ENCODE measurements at regions of chr16 and their contacts with region 1.

Region 1: DNA sequence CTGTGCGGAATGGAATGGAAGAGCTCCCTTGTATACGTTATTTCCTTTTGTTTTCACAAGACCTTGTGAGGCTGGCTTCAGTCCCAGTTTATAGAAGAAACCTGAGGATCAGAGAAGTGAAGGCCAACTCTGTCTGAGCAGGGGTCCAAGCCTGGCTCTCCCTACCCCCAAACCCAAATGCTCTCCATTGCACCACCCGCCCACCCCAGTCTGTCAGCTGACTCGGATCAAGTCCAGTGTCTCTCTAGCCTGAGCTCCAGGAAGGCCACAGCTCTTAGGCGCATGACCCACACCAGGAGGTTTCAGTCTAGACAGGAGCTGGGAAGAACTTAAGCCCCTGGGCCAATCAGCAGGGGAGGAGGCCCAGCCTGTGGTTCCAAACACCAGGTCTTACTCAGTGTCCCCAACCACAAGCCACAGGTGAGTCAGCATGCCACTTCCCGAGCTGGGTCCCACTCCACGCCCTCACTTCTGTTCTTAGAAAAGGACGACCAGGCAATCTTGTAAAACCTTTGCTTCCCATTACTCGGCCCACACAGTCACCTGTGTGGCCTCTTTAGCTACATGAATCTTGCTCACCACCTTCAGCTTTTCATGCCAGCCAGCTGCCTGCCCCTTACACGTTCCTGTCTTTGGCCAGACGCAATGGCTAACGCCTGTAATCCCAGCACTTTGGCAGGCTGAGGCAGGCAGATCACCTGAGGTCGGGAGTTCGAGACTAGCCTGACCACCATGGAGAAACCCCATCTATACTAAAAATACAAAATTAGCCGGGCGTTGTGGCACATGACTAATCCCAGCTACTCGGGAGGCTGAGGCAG is 27.8 kb downstream of the TK2 start:
- DNase-seq: peak; percentile 97
- H3K4me3 Mint-ChIP-seq: peak overlapping the region; percentile 64
- H3K27ac Mint-ChIP-seq: peak overlapping the region; percentile 95
- H3K4me1 Mint-ChIP-seq: peaks cover 95% of the 10 kb centered on the region
- H3K27me3 Mint-ChIP-seq: no peaks in the 10 kb centered on the region

Region 2: GRCh38 chr16:66511615-66512500 is 10.3 kb before region 1 on chr16:
- CTCF ChIA-PET with region 1: interaction called, 8 read pairs
- POLR2A ChIA-PET with region 1: interaction called, 14 read pairs
- DNase-seq: no peak
- H3K4me3 Mint-ChIP-seq: no peak overlapping the region
- H3K27ac Mint-ChIP-seq: no peak overlapping the region
- H3K4me1 Mint-ChIP-seq: peaks cover 31% of the 10 kb centered on the region
- H3K27me3 Mint-ChIP-seq: no peaks in the 10 kb centered on the region

Region 3: GRCh38 chr16:66596986-66597848 is 75.1 kb after region 1 on chr16:
- CTCF ChIA-PET with region 1: interaction called, 8 read pairs
- POLR2A ChIA-PET with region 1: interaction called, 39 read pairs
- DNase-seq: peak; percentile 38
- H3K4me3 Mint-ChIP-seq: peak overlapping the region; percentile 57
- H3K27ac Mint-ChIP-seq: peak overlapping the region; percentile 99
- H3K4me1 Mint-ChIP-seq: peaks cover 50% of the 10 kb centered on the region
- H3K27me3 Mint-ChIP-seq: no peaks in the 10 kb centered on the region